Psoas muscle (tissue), 8 donors: ENCODE measurements at regions of chr4 and their contacts with region 1.

Region 1: DNA sequence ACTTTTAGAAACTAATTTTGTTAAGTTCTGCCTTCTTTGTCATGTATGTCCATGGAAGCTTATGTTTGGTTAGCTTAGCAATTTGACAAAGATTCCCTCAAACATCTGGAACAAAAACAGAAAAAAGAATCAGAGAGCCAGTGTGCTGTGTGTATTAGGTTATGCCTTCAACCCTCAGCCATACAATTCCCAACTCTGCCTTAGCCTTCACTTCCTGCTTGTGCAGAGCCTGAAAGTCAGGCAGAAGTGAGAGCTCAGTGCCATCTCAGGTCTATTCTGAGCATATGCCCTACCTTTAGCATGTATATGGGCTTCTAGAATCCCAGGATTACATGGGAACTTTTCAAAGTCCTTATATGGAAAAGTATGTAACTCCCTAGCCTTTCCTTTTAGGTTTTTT is 58.2 kb upstream of the STOX2 start:
- DNase-seq: no peak
- ATAC-seq: no peak
- H3K4me3 ChIP-seq: no peak overlapping the region
- H3K27ac ChIP-seq: no peak overlapping the region
- H3K4me1 ChIP-seq: no peaks in the 10 kb centered on the region
- H3K27me3 ChIP-seq: no peaks in the 10 kb centered on the region
- CTCF ChIP-seq: no peak

Region 2: GRCh38 chr4:183576701-183577404 is 270.1 kb before region 1 on chr4:
- intact Hi-C with region 1: no loop called
- DNase-seq: no peak
- ATAC-seq: no peak
- H3K4me3 ChIP-seq: no peak overlapping the region
- H3K27ac ChIP-seq: no peak overlapping the region
- H3K4me1 ChIP-seq: no peaks in the 10 kb centered on the region
- H3K27me3 ChIP-seq: no peaks in the 10 kb centered on the region
- CTCF ChIP-seq: no peak

Region 3: GRCh38 chr4:183867247-183867646 is 20.3 kb after region 1 on chr4:
- intact Hi-C with region 1: loop called in 1 of 2 experiments (anchors 2 kb)
- DNase-seq: no peak
- ATAC-seq: no peak
- H3K4me3 ChIP-seq: no peak overlapping the region
- H3K27ac ChIP-seq: no peak overlapping the region
- H3K4me1 ChIP-seq: no peaks in the 10 kb centered on the region
- H3K27me3 ChIP-seq: no peaks in the 10 kb centered on the region
- CTCF ChIP-seq: no peak